Activated T-helper 1 cell treated with anti-CD3 and anti-CD28 coated beads, Interleukin-12 subunit alpha, Interleukin-12 subunit beta, Interleukin-2, Interleukin-4 antibody, amounts not matched to agents 30 ng/mL and 10 ng/mL and 1 ng/mL, durations not matched to agents 14 hours and 24 hours and 36 hours (primary cell): ENCODE measurements at regions of chr1 and their contacts with region 1.

Region 1: GRCh38 chr1:50368179-50369012 is 54.8 kb downstream of the DMRTA2 start:
- DNase-seq: peak; percentile 6
- H3K4me3 Mint-ChIP-seq: no peak overlapping the region
- H3K27ac Mint-ChIP-seq: no peak overlapping the region
- H3K4me1 Mint-ChIP-seq: peaks cover 5% of the 10 kb centered on the region
- H3K27me3 Mint-ChIP-seq: peaks cover 34% of the 10 kb centered on the region

Region 2: GRCh38 chr1:50704126-50704525 is 335.7 kb after region 1 on chr1:
- intact Hi-C with region 1: loop called (anchors 1 kb)
- DNase-seq: no peak
- H3K4me3 Mint-ChIP-seq: no peak overlapping the region
- H3K27ac Mint-ChIP-seq: no peak overlapping the region
- H3K4me1 Mint-ChIP-seq: no peaks in the 10 kb centered on the region
- H3K27me3 Mint-ChIP-seq: no peaks in the 10 kb centered on the region

Region 3: DNA sequence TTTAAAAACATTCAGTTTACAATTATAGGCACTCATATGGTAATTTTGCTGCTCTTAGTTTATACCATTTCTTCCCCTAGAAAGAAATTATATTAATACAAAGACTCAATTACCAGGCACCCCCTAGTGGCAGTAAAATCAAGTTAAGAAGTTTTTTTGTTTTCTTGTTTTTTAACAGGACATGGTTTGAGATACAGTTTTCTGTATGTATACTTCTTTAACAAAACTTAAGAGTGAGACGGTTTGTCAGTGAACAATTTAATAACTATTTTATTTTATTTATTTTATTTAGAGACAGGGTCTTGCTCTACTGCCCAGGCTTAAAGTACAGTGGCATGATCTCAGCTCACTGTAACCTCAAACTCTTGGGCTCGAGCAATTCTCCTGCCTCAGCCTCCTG is 367.0 kb after region 1 on chr1:
- intact Hi-C with region 1: loop called (anchors 1 kb)
- DNase-seq: no peak
- H3K4me3 Mint-ChIP-seq: no peak overlapping the region
- H3K27ac Mint-ChIP-seq: no peak overlapping the region
- H3K4me1 Mint-ChIP-seq: peaks cover 18% of the 10 kb centered on the region
- H3K27me3 Mint-ChIP-seq: no peaks in the 10 kb centered on the region